ENCODE measurements at regions of chr5 and their contacts with region 1.

Region 1: GRCh38 chr5:75236322-75237316 is at the start of gene ANKRD31:
- DNase-seq: peak; percentile 94
- ATAC-seq: peak; percentile 97
- H3K4me3 Mint-ChIP-seq: peak within 1 kb of the TSS; percentile 87
- H3K27ac Mint-ChIP-seq: peak within 1 kb of the TSS; percentile 96
- H3K4me1 Mint-ChIP-seq: peaks cover 8% of the 10 kb centered on the region
- H3K27me3 Mint-ChIP-seq: no peaks in the 10 kb centered on the region
- total RNA-seq, gene ANKRD31: 0.66 to 0.67 TPM

Region 2: GRCh38 chr5:74766849-74767578 is 469.6 kb before region 1 on chr5 and contains the starts of genes GFM2 and NSA2:
- CTCF ChIA-PET with region 1: interaction called, 3 read pairs
- POLR2A ChIA-PET with region 1: no interaction called
- intact Hi-C with region 1: loop called in 1 of 2 experiments (anchors 1 kb)
- DNase-seq: peak; percentile 95
- ATAC-seq: peak; percentile 85
- H3K4me3 Mint-ChIP-seq: peak within 1 kb of the TSS; percentile 94
- H3K27ac Mint-ChIP-seq: peak within 1 kb of the TSS; percentile 99
- H3K4me1 Mint-ChIP-seq: peaks cover 34% of the 10 kb centered on the region
- H3K27me3 Mint-ChIP-seq: no peaks in the 10 kb centered on the region
- total RNA-seq, gene GFM2: 34.7 to 40.4 TPM
- total RNA-seq, gene NSA2: 163 to 253 TPM

Region 3: DNA sequence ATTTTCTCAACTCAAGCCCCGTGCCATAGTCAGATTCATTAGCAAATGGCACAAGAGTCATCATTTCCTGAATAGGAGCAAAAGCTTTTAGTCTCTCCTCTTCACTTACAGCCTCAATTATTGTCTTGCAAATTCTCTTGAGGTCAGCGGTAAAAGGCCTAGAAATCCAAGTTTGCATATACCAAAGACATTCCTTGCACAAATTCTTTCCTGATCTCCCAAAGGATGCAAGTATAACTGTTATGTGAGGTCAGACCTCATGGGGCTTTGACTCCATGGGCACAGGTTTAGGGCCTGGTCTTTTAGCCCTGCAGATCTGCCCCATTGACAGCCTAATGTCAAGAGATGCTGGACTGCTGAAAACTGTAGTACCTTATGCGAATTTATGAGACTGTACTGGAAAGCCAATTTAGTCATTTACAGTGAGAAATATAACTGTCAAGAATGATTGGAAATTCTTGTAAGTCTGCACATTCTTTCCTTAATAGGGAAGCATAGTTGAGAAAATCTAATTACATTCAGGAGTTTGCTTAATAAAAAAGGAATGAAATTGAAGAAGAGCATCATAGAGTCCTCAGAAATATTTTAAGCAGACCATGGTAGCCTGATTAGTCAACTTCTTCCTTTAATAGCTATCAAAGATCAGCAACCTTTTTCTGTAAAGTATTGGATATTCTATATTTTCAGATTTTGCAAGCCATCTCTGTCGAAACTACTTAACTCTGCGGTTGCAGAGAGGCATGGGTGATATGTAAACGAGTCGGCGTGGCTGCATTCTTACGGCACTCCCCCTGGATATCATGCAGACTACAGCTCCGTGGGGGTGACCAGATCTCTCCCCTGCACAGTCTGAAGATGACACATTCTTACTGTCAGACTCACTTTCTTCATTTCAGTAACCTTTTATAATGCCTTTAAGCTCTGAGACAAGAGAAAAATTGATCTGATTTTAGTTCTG is 229.5 kb before region 1 on chr5:
- CTCF ChIA-PET with region 1: no interaction called
- POLR2A ChIA-PET with region 1: no interaction called
- intact Hi-C with region 1: no loop called
- DNase-seq: no peak
- ATAC-seq: no peak
- H3K4me3 Mint-ChIP-seq: no peak overlapping the region
- H3K27ac Mint-ChIP-seq: no peak overlapping the region
- H3K4me1 Mint-ChIP-seq: no peaks in the 10 kb centered on the region
- H3K27me3 Mint-ChIP-seq: no peaks in the 10 kb centered on the region

Region 4: GRCh38 chr5:75202935-75203334 is 33.7 kb before region 1 on chr5:
- CTCF ChIA-PET with region 1: no interaction called
- POLR2A ChIA-PET with region 1: no interaction called
- intact Hi-C with region 1: no loop called
- DNase-seq: peak; percentile 4
- ATAC-seq: no peak
- H3K4me3 Mint-ChIP-seq: no peak overlapping the region
- H3K27ac Mint-ChIP-seq: no peak overlapping the region
- H3K4me1 Mint-ChIP-seq: no peaks in the 10 kb centered on the region
- H3K27me3 Mint-ChIP-seq: no peaks in the 10 kb centered on the region

Region 5: GRCh38 chr5:75320341-75320740 is 83.7 kb after region 1 on chr5:
- CTCF ChIA-PET with region 1: interaction called, 3 read pairs
- POLR2A ChIA-PET with region 1: no interaction called
- intact Hi-C with region 1: loop called in 1 of 2 experiments (anchors 5 kb)
- DNase-seq: no peak
- ATAC-seq: no peak
- H3K4me3 Mint-ChIP-seq: no peak overlapping the region
- H3K27ac Mint-ChIP-seq: no peak overlapping the region
- H3K4me1 Mint-ChIP-seq: peaks cover 23% of the 10 kb centered on the region
- H3K27me3 Mint-ChIP-seq: no peaks in the 10 kb centered on the region

Region 6: GRCh38 chr5:75351139-75351926 is 114.7 kb after region 1 on chr5:
- CTCF ChIA-PET with region 1: interaction called, 5 read pairs
- POLR2A ChIA-PET with region 1: no interaction called
- intact Hi-C with region 1: loop called in 1 of 2 experiments (anchors 5 kb)
- DNase-seq: no peak
- ATAC-seq: peak; percentile 90
- H3K4me3 Mint-ChIP-seq: no peak overlapping the region
- H3K27ac Mint-ChIP-seq: peak overlapping the region; percentile 78
- H3K4me1 Mint-ChIP-seq: peaks cover 16% of the 10 kb centered on the region
- H3K27me3 Mint-ChIP-seq: no peaks in the 10 kb centered on the region

Region 7: DNA sequence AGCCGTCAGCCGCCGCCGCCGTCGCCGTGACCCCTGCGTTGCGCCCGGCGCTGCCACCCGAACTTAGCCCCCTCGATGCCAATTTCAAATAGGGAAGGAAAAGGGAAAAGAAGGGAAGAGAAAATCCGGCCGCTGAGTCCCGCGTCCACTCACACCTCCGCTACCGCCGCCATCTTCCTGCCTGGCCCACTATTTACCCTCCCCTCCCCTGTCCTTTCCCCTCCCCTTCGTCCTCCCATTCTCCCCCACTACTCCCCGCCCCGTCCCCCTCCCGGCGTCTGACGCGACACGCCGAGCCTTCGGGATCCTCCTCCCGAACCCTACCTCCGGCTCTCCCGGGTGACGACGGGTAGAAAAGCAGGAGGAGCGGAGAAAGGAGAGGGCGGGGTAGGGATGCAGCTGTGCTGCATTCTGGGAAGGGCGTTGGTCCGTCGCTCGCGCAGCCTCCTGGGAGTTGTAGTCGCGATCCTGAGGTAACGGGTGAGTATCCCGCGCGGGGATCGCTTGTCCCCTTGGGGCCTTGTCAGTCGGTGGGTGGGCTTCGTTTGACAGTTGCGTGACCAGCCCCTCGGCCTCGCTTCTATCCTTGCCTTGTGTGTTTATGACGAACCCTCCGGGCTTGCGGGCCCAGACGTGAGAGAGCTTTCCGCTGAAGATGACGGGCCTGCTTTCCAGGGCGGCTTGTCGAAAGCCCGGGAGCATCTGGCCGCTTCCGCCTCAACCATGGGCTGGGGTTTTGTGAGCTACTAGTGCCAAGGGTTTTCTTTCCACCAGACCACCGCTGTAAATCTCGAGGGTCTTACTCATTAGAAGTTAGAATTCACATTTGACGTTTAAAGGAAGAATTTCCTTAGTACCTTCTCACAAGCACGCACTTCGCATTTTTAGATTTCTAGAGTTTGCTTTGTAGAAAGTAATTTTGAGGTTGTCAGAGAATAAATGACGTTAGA is 275.1 kb after region 1 on chr5 and contains the starts of genes CERT1 and POLK:
- CTCF ChIA-PET with region 1: no interaction called
- POLR2A ChIA-PET with region 1: no interaction called
- intact Hi-C with region 1: loop called (anchors 1 kb)
- DNase-seq: peak; percentile 98
- ATAC-seq: peak; percentile 96
- H3K4me3 Mint-ChIP-seq: peak within 1 kb of the TSS; percentile 98
- H3K27ac Mint-ChIP-seq: peak within 1 kb of the TSS; percentile 96
- H3K4me1 Mint-ChIP-seq: peaks cover 47% of the 10 kb centered on the region
- H3K27me3 Mint-ChIP-seq: no peaks in the 10 kb centered on the region
- total RNA-seq, gene CERT1: 21.6 to 24.5 TPM
- total RNA-seq, gene POLK: 35.5 to 49.1 TPM

Region 8: GRCh38 chr5:75566710-75567309 is 330.2 kb after region 1 on chr5:
- CTCF ChIA-PET with region 1: no interaction called
- POLR2A ChIA-PET with region 1: no interaction called
- intact Hi-C with region 1: loop called in 1 of 2 experiments (anchors 2 kb)
- DNase-seq: peak; percentile 78
- ATAC-seq: peak; percentile 85
- H3K4me3 Mint-ChIP-seq: peak overlapping the region; percentile 56
- H3K27ac Mint-ChIP-seq: peak overlapping the region; percentile 96
- H3K4me1 Mint-ChIP-seq: peaks cover 63% of the 10 kb centered on the region
- H3K27me3 Mint-ChIP-seq: no peaks in the 10 kb centered on the region

Region 9: GRCh38 chr5:75681125-75681830 is 444.7 kb after region 1 on chr5:
- CTCF ChIA-PET with region 1: interaction called, 20 read pairs
- POLR2A ChIA-PET with region 1: no interaction called
- intact Hi-C with region 1: loop called (anchors 1 to 5 kb)
- DNase-seq: no peak
- ATAC-seq: peak; percentile 45
- H3K4me3 Mint-ChIP-seq: no peak overlapping the region
- H3K27ac Mint-ChIP-seq: no peak overlapping the region
- H3K4me1 Mint-ChIP-seq: peaks cover 13% of the 10 kb centered on the region
- H3K27me3 Mint-ChIP-seq: no peaks in the 10 kb centered on the region

Measured in activated CD4-positive, alpha-beta T cell treated with anti-CD3 and anti-CD28 coated beads for 36 hours (primary cell).